Caco-2 (cell line): ENCODE measurements at regions of chr4 and their contacts with region 1.

Region 1: GRCh38 chr4:46389301-46389775 is 590 bp downstream of the GABRA2 start:
- DNase-seq: peak; percentile 36 to 39
- H3K4me3 ChIP-seq: peak overlapping the region; percentile 44
- H3K4me3 Mint-ChIP-seq: peak overlapping the region; percentile 85
- H3K27ac Mint-ChIP-seq: peak overlapping the region; percentile 56
- H3K4me1 ChIP-seq: 0 out of 2 replicates have a peak, but pooled peaks cover 6% of the 10 kb centered on the region
- H3K4me1 Mint-ChIP-seq: peaks cover 12% of the 10 kb centered on the region
- H3K27me3 ChIP-seq: peaks cover 1% of the 10 kb centered on the region; the same call in 1 of the 2 replicates
- H3K27me3 Mint-ChIP-seq: peaks cover 16% of the 10 kb centered on the region
- CTCF ChIP-seq: no peak

Region 2: GRCh38 chr4:46484881-46485280 is 95.5 kb after region 1 on chr4:
- CTCF ChIA-PET with region 1: no interaction called
- POLR2A ChIA-PET with region 1: no interaction called
- intact Hi-C with region 1: no loop called
- DNase-seq: no peak
- H3K4me3 ChIP-seq: no peak overlapping the region
- H3K4me3 Mint-ChIP-seq: no peak overlapping the region
- H3K27ac Mint-ChIP-seq: no peak overlapping the region
- H3K4me1 ChIP-seq: no peaks in the 10 kb centered on the region
- H3K4me1 Mint-ChIP-seq: no peaks in the 10 kb centered on the region
- H3K27me3 ChIP-seq: no peaks in the 10 kb centered on the region
- H3K27me3 Mint-ChIP-seq: no peaks in the 10 kb centered on the region
- CTCF ChIP-seq: no peak

Region 3: DNA sequence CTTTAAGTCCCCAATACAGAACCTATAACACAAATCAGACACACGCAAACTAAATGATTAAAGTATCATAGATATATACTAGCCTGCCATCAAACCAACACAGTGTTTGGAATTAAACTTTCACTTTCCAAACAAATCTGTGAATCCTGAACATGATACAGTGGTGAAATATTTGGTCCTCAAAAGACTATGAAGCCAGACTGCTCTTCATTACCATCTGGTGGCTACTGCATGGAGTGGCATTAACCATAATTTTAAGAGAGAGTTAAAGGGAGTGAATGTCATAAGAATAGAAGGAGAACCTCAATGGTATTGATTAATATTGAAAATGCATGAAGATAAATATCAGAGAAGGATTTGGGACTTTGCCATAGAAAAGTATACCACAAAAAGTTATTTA is 613.3 kb after region 1 on chr4:
- CTCF ChIA-PET with region 1: no interaction called
- POLR2A ChIA-PET with region 1: interaction called, 13 read pairs
- intact Hi-C with region 1: no loop called
- DNase-seq: peak in 1 of 2 experiments; percentile 7
- H3K4me3 ChIP-seq: no peak overlapping the region
- H3K4me3 Mint-ChIP-seq: no peak overlapping the region
- H3K27ac Mint-ChIP-seq: no peak overlapping the region
- H3K4me1 ChIP-seq: peaks cover 4% of the 10 kb centered on the region; the same call in 1 of the 2 replicates
- H3K4me1 Mint-ChIP-seq: peaks cover 4% of the 10 kb centered on the region
- H3K27me3 ChIP-seq: no peaks in the 10 kb centered on the region
- H3K27me3 Mint-ChIP-seq: no peaks in the 10 kb centered on the region
- CTCF ChIP-seq: peak; percentile 42 to 53